Posterior vena cava (tissue), 2 donors: ENCODE measurements at regions of chr7 and their contacts with region 1.

Region 1: DNA sequence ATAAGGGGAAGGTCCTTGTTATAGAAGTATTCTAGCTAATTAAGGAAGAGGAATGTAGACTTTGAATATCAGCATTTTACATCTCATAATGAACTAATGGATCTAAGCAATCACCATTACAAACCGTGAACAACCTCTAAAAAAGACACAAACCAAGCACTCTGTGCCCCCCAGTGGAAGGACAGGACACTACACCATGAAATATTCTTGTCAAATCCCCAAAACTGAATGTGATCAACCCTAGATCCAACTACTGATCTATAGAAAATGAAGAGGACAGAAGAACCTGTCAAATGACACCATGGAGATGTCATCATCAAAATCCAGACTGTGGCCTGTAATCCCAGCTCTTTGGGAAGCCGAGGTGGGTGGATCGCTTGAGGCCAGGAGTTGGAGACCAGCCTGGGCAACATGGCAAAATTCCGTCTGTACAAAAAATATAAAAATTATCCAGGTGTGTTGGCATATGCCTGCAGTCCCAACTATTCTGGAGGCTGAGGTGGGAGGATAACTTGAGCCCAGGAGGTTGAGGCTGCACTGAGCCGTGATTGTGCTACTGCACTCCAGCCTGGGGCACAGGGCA is 111.3 kb upstream of the CARD11 start:
- DNase-seq: peak; percentile 30

Region 2: GRCh38 chr7:2886900-2887299 is 268.1 kb before region 1 on chr7:
- intact Hi-C with region 1: loop called in 1 of 2 experiments (anchors 10 kb)
- DNase-seq: no peak

Region 3: DNA sequence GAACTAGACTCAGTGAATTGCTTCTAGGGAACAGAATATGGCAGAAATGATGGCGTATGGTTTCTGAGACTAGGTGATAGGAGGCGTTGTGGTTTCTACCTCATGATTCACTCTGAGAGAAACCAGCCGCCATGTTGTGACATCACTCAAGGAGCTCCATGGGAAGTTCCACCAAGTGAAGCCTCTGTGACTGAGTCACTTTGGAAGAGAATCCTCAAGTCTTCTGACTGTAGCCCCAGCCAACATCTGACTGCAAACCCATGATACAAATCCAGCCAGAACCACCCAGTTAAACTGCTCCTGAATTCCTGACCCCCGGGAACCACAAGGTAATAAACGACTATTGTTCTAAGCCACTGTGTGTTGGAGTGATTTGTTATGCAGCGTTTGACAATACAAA is 20.3 kb before region 1 on chr7:
- intact Hi-C with region 1: no loop called
- DNase-seq: no peak

Region 4: DNA sequence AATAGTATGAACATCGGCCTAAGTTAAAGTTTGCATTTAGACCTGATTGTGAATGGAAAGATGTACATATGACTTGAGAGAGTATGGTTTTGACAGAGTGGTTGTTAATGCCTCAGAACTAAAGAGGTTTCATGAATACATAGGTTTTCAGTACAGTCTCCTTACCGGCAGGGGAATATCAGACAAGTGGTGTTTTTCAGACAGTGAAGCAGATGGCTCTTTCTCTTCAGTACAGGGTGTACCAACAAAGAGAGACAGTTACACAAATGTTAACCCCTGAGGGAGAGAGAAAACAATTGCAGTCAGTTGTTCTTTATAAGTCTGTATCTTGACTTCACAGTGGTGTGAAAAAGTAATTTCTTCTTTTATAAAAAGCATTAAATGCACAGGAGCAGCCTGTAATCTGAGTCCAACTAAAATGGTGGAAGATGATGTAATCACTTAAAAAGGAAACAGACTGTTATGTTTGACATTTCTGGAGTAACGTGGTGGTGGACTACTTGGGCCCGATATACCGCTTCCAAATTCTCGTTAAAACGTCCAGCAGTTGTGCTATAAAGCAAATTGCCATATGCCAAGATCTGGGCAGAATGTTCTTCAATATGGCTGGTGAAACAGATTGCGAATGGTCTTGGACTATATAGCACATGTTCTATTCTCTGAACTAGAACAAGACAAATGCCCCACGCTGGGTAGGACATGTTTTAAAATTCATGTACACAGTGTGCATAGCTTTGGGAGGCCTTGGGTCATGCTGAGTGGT is 215.2 kb after region 1 on chr7:
- intact Hi-C with region 1: no loop called
- DNase-seq: no peak